ENCODE measurements at regions of chr1 and their contacts with region 1.

Region 1: DNA sequence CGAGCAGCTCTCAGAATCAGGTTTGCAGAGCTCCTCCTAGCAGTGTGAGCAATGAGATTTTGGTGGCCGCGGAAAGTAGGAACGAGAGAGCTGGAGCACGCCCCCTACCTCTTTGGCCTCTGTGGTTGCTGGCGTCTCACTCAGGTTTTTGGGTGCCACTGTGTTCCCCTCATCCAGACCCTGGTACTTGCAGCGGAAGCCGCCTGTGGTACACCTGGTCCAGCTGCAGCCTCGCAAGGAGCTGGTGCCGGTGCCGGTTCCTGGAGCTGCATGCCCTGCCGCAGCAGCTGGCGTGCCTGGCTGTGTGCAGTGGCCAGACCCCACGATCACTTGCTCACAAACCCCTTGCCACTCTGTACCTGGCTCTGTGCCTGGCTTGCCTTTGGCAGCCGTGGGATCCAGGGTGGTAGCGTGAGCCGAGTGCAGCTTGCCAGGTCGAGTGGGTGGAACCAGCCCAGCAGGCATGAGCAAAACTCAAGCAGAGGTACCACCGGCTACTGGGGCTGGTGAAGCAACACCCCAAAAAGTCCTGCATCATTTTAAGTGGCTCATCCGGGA is 845.0 kb downstream of the KCNT2 start:
- DNase-seq: peak in 1 of 2 experiments; percentile 7
- H3K4me3 ChIP-seq: peak overlapping the region; percentile 34
- H3K4me3 Mint-ChIP-seq: peak overlapping the region; percentile 60
- H3K27ac Mint-ChIP-seq: no peak overlapping the region
- H3K4me1 ChIP-seq: no peaks in the 10 kb centered on the region
- H3K4me1 Mint-ChIP-seq: no peaks in the 10 kb centered on the region
- H3K27me3 ChIP-seq: no peaks in the 10 kb centered on the region
- H3K27me3 Mint-ChIP-seq: no peaks in the 10 kb centered on the region
- CTCF ChIP-seq: no peak

Region 2: DNA sequence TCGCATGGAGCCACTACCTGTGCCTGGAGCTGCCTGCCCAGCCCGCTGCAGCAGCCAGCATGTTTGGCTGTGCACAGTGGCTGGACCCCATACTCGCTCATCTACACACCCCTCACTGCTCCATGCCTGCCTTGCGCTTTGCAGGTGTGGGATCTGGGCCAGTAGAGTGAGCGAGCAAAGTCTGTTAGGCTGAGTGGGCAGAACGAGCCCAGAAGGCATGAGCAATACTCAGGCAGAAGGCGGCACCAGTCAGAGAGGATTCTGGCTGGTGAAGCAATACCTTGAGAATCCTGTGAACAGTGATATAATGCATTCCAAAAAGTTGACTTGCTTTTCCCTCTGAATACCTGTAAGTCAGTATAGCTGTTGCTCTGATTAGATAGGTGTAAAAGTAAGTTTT is 28.6 kb after region 1 on chr1:
- CTCF ChIA-PET with region 1: no interaction called
- POLR2A ChIA-PET with region 1: no interaction called
- intact Hi-C with region 1: loop called (anchors 1 kb)
- DNase-seq: no peak
- H3K4me3 ChIP-seq: no peak overlapping the region
- H3K4me3 Mint-ChIP-seq: no peak overlapping the region
- H3K27ac Mint-ChIP-seq: no peak overlapping the region
- H3K4me1 ChIP-seq: no peaks in the 10 kb centered on the region
- H3K4me1 Mint-ChIP-seq: no peaks in the 10 kb centered on the region
- H3K27me3 ChIP-seq: no peaks in the 10 kb centered on the region
- H3K27me3 Mint-ChIP-seq: no peaks in the 10 kb centered on the region
- CTCF ChIP-seq: no peak

Measured in Caco-2 (cell line).